IMR-90 (cell line): ENCODE measurements at regions of chr1 and their contacts with region 1.

Region 1: DNA sequence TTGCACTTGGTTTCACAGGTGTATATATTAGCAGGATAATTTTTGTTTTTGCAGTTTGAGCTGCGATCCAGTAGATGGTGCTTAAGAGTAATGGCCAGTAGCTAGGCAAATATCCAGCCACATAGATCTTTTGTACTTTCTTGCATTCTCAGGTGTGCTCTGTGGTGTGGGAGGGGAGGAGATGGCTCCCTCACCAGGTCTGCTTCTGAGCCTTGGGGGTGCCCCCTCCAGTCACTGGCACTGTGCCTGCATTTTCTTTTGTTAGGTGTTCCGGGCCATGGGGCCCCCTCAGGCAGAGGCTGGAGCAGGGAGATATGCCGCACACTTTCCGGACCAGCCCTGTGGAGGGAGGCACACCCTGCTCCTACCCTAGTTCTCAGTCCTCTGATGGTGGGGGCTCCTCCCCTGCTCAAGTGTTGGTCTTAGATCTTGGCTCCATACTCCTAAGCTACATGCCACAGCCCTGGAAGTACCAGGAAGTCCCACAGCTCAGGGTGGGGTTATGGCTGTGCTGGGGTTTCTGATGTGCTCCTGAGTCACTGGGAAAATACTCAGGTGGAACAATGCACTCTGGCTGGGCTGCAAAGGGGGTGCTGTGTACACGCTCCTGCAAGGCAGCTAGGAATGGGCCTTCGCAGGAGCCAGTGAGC is 197.6 kb upstream of the DMRTA2 start:
- DNase-seq: peak; percentile 40
- ATAC-seq: peak; percentile 82
- H3K4me3 ChIP-seq: no peak overlapping the region
- H3K27ac ChIP-seq: no peak overlapping the region
- H3K4me1 ChIP-seq: peaks cover 3% of the 10 kb centered on the region
- H3K27me3 ChIP-seq: no peaks in the 10 kb centered on the region
- CTCF ChIP-seq: peak; percentile 70
- POLR2A ChIP-seq: no peak
- RAD21 ChIP-seq: peak; percentile 69

Region 2: GRCh38 chr1:50631204-50631603 is 10.4 kb after region 1 on chr1:
- CTCF ChIA-PET with region 1: no interaction called
- POLR2A ChIA-PET with region 1: no interaction called
- dilution Hi-C with region 1: no loop called
- in situ Hi-C with region 1: no loop called
- intact Hi-C with region 1: no loop called
- DNase-seq: no peak
- ATAC-seq: no peak
- H3K4me3 ChIP-seq: no peak overlapping the region
- H3K27ac ChIP-seq: no peak overlapping the region
- H3K4me1 ChIP-seq: no peaks in the 10 kb centered on the region
- H3K27me3 ChIP-seq: no peaks in the 10 kb centered on the region
- CTCF ChIP-seq: no peak
- POLR2A ChIP-seq: no peak
- RAD21 ChIP-seq: no peak

Region 3: DNA sequence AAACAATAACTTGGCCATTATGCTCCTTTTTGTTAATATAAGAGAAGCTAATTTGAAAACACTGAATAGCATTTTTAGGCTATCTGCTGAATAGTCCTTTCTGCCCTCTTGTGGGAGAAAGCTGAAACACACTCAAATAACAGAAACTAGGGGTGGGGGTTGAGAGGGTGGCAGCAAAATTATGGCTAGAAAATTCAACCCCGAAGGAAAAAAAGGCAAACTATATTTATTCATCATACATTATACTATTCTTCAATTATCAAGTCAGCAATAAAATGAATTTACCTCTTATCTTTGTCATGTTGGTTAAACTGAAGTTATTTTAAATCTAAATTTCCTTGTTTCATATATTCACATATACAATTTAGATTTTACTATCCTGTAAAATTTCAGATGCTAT is 83.3 kb after region 1 on chr1:
- CTCF ChIA-PET with region 1: interaction called, 9 read pairs
- POLR2A ChIA-PET with region 1: no interaction called
- dilution Hi-C with region 1: no loop called
- in situ Hi-C with region 1: loop called (anchors 10 kb)
- intact Hi-C with region 1: loop called (anchors 1 kb)
- DNase-seq: peak; percentile 41
- ATAC-seq: peak; percentile 64; the same call in 1 of the 2 replicates
- H3K4me3 ChIP-seq: no peak overlapping the region
- H3K27ac ChIP-seq: no peak overlapping the region
- H3K4me1 ChIP-seq: no peaks in the 10 kb centered on the region
- H3K27me3 ChIP-seq: no peaks in the 10 kb centered on the region
- CTCF ChIP-seq: peak; percentile 74
- POLR2A ChIP-seq: no peak
- RAD21 ChIP-seq: peak; percentile 69